Calu3 (cell line): ENCODE measurements at regions of chr10 and their contacts with region 1.

Region 1: DNA sequence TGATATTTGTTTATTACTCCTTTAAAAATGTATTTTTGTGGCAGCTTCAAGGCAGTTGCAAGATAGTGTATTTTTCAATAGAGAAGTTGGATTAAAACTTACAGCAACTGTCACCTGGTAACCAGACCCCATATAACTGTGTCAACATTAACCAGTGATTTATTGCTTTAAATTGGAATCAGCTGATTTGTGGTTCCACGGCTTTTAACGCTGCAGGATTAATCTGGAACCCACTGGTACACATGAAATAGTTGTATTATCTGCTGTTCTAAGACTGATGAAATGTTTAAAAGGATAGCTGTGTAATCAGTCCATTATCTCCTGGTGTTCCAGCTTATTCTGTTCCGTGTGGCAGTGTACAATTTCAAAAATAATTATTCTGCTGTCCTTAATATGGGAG is 180.2 kb downstream of the CELF2 start:
- DNase-seq: no peak
- H3K4me3 Mint-ChIP-seq: no peak overlapping the region
- H3K27ac Mint-ChIP-seq: no peak overlapping the region
- H3K4me1 Mint-ChIP-seq: no peaks in the 10 kb centered on the region
- H3K27me3 Mint-ChIP-seq: peaks cover 35% of the 10 kb centered on the region
- CTCF ChIP-seq: no peak

Region 2: DNA sequence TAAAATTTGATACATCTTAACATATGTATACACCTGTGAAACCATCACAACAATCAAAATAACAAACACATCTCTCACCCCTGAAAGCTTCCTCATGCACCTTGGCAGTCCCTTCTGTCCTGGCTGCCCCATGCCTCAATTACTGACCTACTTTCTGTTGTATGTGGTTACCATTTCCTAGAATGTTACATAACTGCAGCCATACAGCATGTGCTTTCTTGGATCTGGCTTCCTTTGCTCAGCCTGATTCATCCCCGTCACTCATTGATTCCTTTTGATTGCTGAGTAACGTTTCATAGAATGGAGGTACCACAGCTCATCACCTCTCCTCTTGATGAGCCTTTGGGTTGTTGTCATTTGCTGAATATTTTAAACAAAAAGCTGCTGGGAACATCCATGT is 14.9 kb before region 1 on chr10:
- CTCF ChIA-PET with region 1: no interaction called
- intact Hi-C with region 1: loop called (anchors 1 kb)
- DNase-seq: no peak
- H3K4me3 Mint-ChIP-seq: no peak overlapping the region
- H3K27ac Mint-ChIP-seq: no peak overlapping the region
- H3K4me1 Mint-ChIP-seq: no peaks in the 10 kb centered on the region
- H3K27me3 Mint-ChIP-seq: no peaks in the 10 kb centered on the region
- CTCF ChIP-seq: no peak